ENCODE measurements at regions of chr13 and their contacts with region 1.

Region 1: DNA sequence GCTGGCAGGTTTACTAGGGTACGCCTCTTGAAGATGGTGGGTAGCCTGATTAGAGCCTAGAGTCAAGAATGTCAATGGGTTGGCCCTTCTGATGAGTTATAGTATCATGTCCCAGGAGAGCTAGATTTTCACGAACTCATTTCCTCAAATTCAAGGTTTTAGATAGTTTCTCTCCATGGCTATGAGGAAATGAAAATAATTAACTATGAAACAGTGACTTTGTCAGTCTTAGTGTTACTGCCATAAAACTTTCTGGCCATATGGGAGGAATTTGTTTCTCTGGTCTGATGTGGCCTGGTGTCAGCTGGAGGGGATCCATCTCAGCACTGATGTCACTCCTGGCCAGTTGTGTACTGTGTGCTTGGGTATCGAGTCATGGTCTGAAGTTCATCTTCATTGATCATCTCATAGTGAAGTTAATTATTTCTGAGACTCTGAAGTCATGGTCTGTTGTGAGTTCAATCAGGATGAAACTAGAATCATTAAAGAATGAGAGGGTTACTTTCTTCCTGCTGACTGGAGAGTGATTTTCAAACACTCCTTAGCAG is 49.4 kb upstream of the TNFSF11 start:
- DNase-seq: no peak
- H3K4me3 ChIP-seq: no peak overlapping the region
- H3K27ac ChIP-seq: no peak overlapping the region
- H3K4me1 ChIP-seq: no peaks in the 10 kb centered on the region
- H3K27me3 ChIP-seq: no peaks in the 10 kb centered on the region
- CTCF ChIP-seq: no peak

Region 2: DNA sequence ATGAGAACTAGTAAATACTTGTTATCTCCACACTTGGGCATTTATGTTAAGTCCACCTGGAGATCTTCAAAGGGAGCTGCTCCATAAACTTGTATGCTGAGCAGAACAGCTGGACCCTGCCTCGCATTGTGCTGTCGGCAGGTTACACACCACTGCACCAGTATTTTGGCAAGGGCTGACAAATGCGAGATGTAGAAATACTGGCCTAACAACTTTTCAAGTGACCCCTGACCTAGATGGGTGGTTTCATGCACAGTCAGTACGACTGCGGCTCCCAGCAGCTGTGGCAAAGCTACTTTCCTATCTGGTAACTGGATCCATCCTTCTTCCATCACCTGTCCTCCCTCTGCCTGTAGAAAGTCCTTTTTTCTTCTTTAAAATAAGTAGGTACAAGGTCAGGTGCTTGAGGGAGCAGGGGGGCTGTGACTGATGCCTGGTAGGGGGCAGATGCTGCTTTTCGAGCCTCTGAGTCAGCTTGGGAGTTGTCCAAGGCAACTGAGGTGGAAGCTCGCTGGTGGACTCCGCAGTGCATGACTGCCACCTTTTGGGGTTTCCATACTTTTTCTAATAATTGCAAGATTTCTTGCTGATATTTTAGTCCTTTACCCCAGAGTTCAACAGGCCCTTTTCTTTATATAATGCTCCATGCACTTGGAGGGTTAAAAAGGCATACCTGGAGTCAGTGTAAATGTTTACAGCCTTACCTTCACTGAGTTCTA is 1648.4 kb before region 1 on chr13:
- CTCF ChIA-PET with region 1: no interaction called
- POLR2A ChIA-PET with region 1: interaction called, 14 read pairs
- intact Hi-C with region 1: no loop called
- DNase-seq: no peak
- H3K4me3 ChIP-seq: no peak overlapping the region
- H3K27ac ChIP-seq: no peak overlapping the region
- H3K4me1 ChIP-seq: no peaks in the 10 kb centered on the region
- H3K27me3 ChIP-seq: no peaks in the 10 kb centered on the region
- CTCF ChIP-seq: no peak

Region 3: GRCh38 chr13:42751693-42752092 is 227.1 kb after region 1 on chr13:
- CTCF ChIA-PET with region 1: no interaction called
- POLR2A ChIA-PET with region 1: no interaction called
- intact Hi-C with region 1: no loop called
- DNase-seq: no peak
- H3K4me3 ChIP-seq: no peak overlapping the region
- H3K27ac ChIP-seq: no peak overlapping the region
- H3K4me1 ChIP-seq: peaks cover 4% of the 10 kb centered on the region
- H3K27me3 ChIP-seq: no peaks in the 10 kb centered on the region
- CTCF ChIP-seq: no peak